ENCODE measurements at regions of chr2 and their contacts with region 1.

Region 1: DNA sequence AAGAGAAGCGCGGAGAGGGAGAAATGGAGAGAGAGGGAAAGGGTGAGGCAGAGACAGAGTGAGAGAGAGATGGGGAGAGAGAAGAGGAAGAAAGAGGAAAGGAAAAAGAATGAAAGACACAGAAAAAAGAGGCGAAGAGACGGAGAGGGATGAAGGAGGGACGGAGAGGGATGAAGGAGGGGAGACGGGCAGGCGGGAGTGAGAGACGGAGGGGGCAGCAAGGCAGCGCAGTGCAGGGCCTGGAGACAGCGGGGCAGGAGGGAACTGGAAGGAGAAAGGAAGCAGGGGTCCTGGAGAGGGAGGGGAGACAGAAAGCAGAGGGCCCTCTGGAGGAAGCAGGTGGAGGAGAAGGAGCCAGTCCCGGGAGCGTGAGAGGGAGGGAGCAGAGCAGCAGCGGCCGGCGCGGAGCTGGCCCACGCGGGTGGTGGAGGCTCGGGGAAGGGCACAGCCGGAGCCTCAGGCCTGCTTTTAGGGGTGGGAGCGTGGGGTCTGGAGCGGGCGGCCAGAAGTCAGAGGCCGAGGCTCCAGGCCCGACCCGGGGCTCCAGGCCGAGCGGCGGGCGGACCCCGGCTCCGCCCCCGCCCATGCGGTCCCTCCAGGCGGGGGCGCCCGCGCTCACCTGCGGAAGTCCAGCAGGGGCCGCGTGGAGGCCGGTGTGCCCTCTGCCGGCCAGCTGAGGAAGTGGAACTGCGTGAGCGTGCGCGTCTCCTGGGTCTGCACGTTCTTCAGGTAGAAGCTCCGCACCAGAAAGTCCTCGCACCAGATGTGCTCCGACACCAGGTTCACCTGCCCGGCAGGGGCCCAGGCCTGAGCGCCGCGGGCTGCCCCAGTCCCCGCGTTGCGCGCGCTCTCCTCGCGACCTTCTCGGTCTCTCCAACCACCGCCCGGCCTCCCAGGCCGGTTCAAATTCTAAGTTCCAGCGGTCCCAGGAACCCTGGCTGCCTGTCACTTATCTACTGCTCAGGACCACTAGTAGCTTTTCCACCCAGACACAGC is 14.5 kb downstream of the PTPRN start:
- DNase-seq: peak; percentile 90
- H3K4me3 Mint-ChIP-seq: peak overlapping the region; percentile 66
- H3K27ac Mint-ChIP-seq: no peak overlapping the region
- H3K4me1 Mint-ChIP-seq: peaks cover 22% of the 10 kb centered on the region
- H3K27me3 Mint-ChIP-seq: peaks cover 14% of the 10 kb centered on the region

Region 2: DNA sequence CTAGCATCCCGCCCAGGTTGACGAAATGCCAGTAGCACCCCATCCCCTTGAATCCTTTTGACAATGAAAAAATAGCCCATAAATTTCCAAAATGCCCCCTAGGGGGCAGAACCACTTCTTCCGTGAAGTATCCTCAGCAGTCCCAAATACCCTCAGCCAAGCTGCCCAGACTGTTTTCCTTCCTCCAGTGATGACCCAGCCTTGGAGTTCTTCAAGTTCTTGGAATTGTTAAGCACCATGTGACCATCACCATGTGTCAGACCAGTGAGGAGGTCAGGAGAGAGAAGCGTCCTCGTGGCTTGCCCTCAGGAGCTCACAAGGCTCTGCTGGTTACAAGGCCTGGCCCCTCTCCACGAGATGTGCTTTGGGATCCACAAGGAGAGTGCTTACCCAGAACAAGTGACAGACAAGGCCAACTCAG is 123.4 kb before region 1 on chr2:
- CTCF ChIA-PET with region 1: interaction called, 26 read pairs
- POLR2A ChIA-PET with region 1: interaction called, 14 read pairs
- DNase-seq: peak; percentile 24
- H3K4me3 Mint-ChIP-seq: no peak overlapping the region
- H3K27ac Mint-ChIP-seq: no peak overlapping the region
- H3K4me1 Mint-ChIP-seq: peaks cover 42% of the 10 kb centered on the region
- H3K27me3 Mint-ChIP-seq: no peaks in the 10 kb centered on the region

Region 3: GRCh38 chr2:219218732-219219701 is 75.6 kb before region 1 on chr2 and contains the start of gene ABCB6:
- CTCF ChIA-PET with region 1: interaction called, 16 read pairs
- POLR2A ChIA-PET with region 1: interaction called, 4 read pairs
- DNase-seq: peak; percentile 88
- H3K4me3 Mint-ChIP-seq: peak within 1 kb of the TSS; percentile 85
- H3K27ac Mint-ChIP-seq: peak within 1 kb of the TSS; percentile 82
- H3K4me1 Mint-ChIP-seq: peaks cover 38% of the 10 kb centered on the region
- H3K27me3 Mint-ChIP-seq: no peaks in the 10 kb centered on the region
- total RNA-seq, gene ABCB6: 15.2 to 17.9 TPM

Region 4: DNA sequence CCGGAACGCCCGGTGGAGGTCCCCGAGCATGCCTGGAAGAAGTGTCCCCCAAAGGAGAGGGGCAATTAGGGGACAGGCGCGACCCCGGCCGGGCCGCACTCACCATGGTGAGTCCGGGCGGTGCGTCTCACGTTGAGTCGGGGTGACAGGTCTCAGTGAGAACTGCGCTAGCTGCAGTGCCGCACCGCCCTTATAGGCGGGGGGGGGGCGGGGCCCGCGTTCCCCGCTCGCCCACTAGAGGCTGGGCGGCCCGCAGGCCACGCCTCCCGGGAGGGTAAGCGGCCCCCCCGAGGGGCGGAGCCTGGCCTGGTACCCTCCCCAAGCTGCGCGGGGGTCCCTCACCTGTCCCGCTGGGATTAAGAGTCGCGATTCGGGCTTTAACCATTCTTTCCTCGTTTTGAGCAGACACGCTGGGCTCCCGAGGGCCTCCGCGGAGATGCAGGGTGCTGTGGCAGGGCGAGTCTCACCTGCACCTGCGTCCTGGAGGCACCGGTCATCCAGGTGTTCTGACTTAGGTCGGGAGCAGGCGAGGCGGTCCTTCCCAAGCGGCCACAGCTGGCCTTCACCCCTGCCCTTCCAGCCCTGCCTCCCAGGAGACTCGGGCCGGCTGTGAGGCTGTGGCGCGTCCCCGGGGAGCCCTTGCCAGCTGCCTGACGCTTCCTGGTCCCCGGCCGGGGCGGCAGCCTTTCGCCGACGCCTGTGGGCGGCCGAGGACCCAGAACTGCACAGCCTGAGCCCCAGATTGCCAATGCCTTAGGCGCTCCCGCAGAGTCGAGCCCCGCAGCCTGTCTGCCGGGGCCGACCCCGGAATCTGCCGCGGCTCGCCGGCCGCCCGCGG is 40.7 kb before region 1 on chr2 and contains the start of gene TUBA4A:
- CTCF ChIA-PET with region 1: interaction called, 120 read pairs
- POLR2A ChIA-PET with region 1: interaction called, 53 read pairs
- DNase-seq: peak; percentile 92
- H3K4me3 Mint-ChIP-seq: peak within 1 kb of the TSS; percentile 100
- H3K27ac Mint-ChIP-seq: peak within 1 kb of the TSS; percentile 81
- H3K4me1 Mint-ChIP-seq: peaks cover 47% of the 10 kb centered on the region
- H3K27me3 Mint-ChIP-seq: peaks cover 2% of the 10 kb centered on the region
- total RNA-seq, gene TUBA4A: 313 to 344 TPM

Region 5: GRCh38 chr2:219278655-219279516 is 15.8 kb before region 1 on chr2 and contains the start of gene DNAJB2:
- CTCF ChIA-PET with region 1: interaction called, 206 read pairs
- POLR2A ChIA-PET with region 1: interaction called, 69 read pairs
- DNase-seq: peak; percentile 99
- H3K4me3 Mint-ChIP-seq: peak within 1 kb of the TSS; percentile 87
- H3K27ac Mint-ChIP-seq: peak within 1 kb of the TSS; percentile 93
- H3K4me1 Mint-ChIP-seq: peaks cover 42% of the 10 kb centered on the region
- H3K27me3 Mint-ChIP-seq: peaks cover 3% of the 10 kb centered on the region
- total RNA-seq, gene DNAJB2: 57.0 to 59.7 TPM

Region 6: DNA sequence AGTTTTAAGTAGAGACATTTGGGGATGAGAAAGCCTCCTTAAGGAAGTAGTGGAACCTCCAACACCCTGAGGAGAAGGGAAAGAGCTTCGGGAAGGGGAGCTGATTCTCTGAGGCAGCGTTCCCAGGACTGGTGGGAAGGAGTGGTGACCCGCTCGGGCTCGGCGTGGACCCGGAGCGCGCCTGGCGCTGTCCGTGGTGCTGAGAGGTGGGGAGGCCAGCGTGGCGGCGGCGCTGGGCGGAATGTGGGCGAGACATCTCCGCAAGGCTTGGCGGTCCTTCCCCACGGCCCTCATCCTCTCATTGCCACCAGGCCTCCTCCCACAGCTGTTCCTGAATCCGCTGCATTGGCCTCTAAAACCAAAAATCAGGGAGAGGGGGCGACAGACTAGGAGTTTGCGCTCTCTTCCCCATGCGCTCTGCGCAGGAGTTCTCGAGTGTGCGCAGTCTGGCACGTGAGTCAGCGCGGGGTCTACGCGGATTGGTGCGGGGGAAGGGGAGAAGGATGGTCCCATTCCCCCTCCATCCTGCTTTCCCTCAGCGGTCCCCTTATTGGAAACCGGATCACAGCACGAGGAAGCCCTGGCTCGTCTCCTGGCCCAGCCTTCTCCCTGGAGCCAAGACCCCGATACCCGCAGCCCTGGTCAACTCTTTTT is 37.0 kb after region 1 on chr2:
- CTCF ChIA-PET with region 1: no interaction called
- POLR2A ChIA-PET with region 1: no interaction called
- DNase-seq: peak; percentile 29
- H3K4me3 Mint-ChIP-seq: no peak overlapping the region
- H3K27ac Mint-ChIP-seq: no peak overlapping the region
- H3K4me1 Mint-ChIP-seq: no peaks in the 10 kb centered on the region
- H3K27me3 Mint-ChIP-seq: peaks cover 39% of the 10 kb centered on the region

Region 7: DNA sequence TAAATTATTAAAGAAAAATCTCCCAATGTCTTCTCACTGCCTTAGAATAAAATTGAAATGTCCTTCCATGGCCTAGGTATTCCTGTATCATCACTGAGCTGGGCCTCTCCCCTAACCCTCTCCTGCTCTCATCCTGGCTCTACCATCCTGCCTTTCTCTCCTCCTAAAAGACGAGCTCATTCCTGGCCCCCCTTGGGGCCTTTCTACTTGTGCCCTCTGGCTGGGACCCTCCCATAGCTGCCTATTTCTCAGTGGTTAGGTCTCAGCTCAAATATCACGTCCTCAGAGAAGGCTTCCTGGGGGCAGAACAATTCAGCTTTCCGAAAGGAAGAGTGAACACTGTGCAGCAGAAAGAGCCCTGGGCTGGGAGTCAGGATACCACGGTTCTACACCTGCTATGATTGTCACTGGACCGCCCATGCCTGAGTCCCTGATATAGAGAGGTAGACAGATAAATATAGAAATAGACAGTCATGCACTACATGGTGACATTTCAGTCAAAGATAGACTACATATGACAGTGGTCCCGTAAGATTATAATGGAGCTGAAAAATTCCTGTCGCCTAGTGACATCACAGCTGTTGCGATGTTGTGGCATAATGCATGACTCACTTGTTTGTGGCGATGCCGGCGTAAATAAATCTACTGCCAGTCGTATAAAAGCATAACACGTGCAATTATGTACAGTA is 83.7 kb after region 1 on chr2:
- CTCF ChIA-PET with region 1: no interaction called
- POLR2A ChIA-PET with region 1: no interaction called
- DNase-seq: no peak
- H3K4me3 Mint-ChIP-seq: no peak overlapping the region
- H3K27ac Mint-ChIP-seq: no peak overlapping the region
- H3K4me1 Mint-ChIP-seq: no peaks in the 10 kb centered on the region
- H3K27me3 Mint-ChIP-seq: no peaks in the 10 kb centered on the region

Region 8: GRCh38 chr2:219408631-219409030 is 114.0 kb after region 1 on chr2:
- CTCF ChIA-PET with region 1: no interaction called
- POLR2A ChIA-PET with region 1: no interaction called
- DNase-seq: no peak
- H3K4me3 Mint-ChIP-seq: no peak overlapping the region
- H3K27ac Mint-ChIP-seq: no peak overlapping the region
- H3K4me1 Mint-ChIP-seq: no peaks in the 10 kb centered on the region
- H3K27me3 Mint-ChIP-seq: peaks cover 18% of the 10 kb centered on the region